Calu3 (cell line): ENCODE measurements at regions of chr7 and their contacts with region 1.

Region 1: DNA sequence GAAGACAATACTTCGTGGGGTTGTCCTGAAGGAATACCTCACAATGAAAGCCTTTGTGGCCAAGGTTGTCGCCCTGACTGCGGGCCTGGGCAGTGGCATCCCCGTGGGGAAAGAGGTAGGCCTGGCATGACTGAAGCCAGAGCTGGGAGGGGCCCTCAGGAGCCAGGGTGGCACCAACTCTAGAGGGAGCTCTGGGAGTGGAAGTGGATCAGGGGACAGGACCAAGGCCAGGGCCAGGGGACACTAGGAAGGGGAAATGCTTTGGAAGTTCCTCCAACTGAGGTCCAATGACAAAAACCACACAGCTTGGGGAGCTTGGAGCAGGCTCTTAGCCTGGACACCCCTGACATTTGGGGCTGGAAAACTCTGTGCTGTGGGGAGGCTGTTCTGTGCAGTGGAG is 5.8 kb downstream of the CLCN1 start:
- DNase-seq: peak; percentile 70
- H3K4me3 Mint-ChIP-seq: no peak overlapping the region
- H3K27ac Mint-ChIP-seq: no peak overlapping the region
- H3K4me1 Mint-ChIP-seq: peaks cover 45% of the 10 kb centered on the region
- H3K27me3 Mint-ChIP-seq: no peaks in the 10 kb centered on the region
- CTCF ChIP-seq: peak; percentile 52

Region 2: DNA sequence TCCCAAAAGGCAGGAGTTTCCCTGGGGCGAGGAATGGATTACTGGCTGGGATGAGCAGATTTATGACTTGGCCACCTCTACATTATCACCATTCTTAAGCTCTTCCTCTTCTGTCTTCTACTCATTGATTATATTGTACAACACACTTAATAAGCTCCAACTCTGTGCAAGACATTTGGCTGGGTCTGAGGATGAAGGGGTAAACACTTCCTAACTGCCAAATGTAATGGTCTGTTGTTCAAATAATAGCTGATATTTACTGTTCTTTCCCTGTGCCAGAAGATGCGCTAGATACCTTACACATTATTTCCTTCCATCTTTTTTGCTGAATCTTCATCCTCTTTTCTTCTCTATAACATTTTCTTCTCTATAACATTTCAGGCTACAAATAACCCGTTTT is 258.0 kb before region 1 on chr7:
- CTCF ChIA-PET with region 1: no interaction called
- intact Hi-C with region 1: no loop called
- DNase-seq: no peak
- H3K4me3 Mint-ChIP-seq: no peak overlapping the region
- H3K27ac Mint-ChIP-seq: no peak overlapping the region
- H3K4me1 Mint-ChIP-seq: no peaks in the 10 kb centered on the region
- H3K27me3 Mint-ChIP-seq: peaks cover 57% of the 10 kb centered on the region
- CTCF ChIP-seq: no peak

Region 3: GRCh38 chr7:143372070-143372469 is 50.3 kb after region 1 on chr7:
- CTCF ChIA-PET with region 1: interaction called, 3 read pairs
- intact Hi-C with region 1: loop called (anchors 5 kb)
- DNase-seq: peak; percentile 40
- H3K4me3 Mint-ChIP-seq: no peak overlapping the region
- H3K27ac Mint-ChIP-seq: no peak overlapping the region
- H3K4me1 Mint-ChIP-seq: peaks cover 57% of the 10 kb centered on the region
- H3K27me3 Mint-ChIP-seq: no peaks in the 10 kb centered on the region
- CTCF ChIP-seq: no peak

Region 4: GRCh38 chr7:143408686-143409561 is 87.2 kb after region 1 on chr7 and contains the start of gene EPHA1:
- CTCF ChIA-PET with region 1: interaction called, 4 read pairs
- intact Hi-C with region 1: loop called (anchors 2 kb)
- DNase-seq: peak; percentile 81
- H3K4me3 Mint-ChIP-seq: peak within 1 kb of the TSS; percentile 88
- H3K27ac Mint-ChIP-seq: peak within 1 kb of the TSS; percentile 81
- H3K4me1 Mint-ChIP-seq: peaks cover 20% of the 10 kb centered on the region
- H3K27me3 Mint-ChIP-seq: no peaks in the 10 kb centered on the region
- CTCF ChIP-seq: peak; percentile 73
- total RNA-seq, gene EPHA1: 21.6 and 23.6 TPM in 2 replicates

Region 5: DNA sequence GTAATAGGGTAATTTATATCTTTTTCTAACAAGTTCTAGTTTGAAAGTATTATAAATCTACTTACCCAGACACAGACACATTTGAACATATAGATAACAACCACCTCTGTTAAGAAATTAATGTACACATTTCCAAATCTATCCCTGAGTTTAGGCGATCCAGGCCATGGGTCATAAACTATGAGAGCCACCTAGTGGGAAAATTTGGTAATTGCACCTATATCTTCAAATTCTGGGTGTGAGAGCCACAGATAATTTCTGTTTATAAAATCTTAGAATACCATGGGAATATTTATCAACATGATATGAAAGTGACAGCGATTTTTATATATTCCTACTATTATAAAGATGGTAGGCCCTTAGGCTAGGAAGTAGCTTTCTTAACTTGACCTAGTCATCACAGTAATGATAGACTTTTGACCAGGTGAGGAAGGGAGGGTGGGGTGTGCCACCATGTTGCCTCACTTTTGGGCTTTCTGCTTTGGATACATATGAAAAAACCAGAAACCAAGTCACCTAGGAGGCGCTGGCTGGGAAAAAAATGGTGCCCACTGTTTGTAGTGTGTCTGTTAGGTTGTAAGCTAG is 94.9 kb after region 1 on chr7:
- CTCF ChIA-PET with region 1: no interaction called
- intact Hi-C with region 1: loop called (anchors 2 kb)
- DNase-seq: peak; percentile 41
- H3K4me3 Mint-ChIP-seq: no peak overlapping the region
- H3K27ac Mint-ChIP-seq: no peak overlapping the region
- H3K4me1 Mint-ChIP-seq: peaks cover 39% of the 10 kb centered on the region
- H3K27me3 Mint-ChIP-seq: no peaks in the 10 kb centered on the region
- CTCF ChIP-seq: peak; percentile 70